ENCODE measurements at regions of chr11 and their contacts with region 1.

Region 1: GRCh38 chr11:117107701-117108590 is 9.7 kb upstream of the SIK3 start:
- DNase-seq: no peak
- ATAC-seq: no peak
- H3K4me3 ChIP-seq: no peak overlapping the region
- H3K27ac ChIP-seq: no peak overlapping the region
- H3K4me1 ChIP-seq: no peaks in the 10 kb centered on the region
- H3K27me3 ChIP-seq: no peaks in the 10 kb centered on the region
- CTCF ChIP-seq: no peak

Region 2: GRCh38 chr11:116787786-116788486 is 320.0 kb before region 1 on chr11 and contains the start of gene ZPR1:
- intact Hi-C with region 1: loop called (anchors 10 kb)
- DNase-seq: peak; percentile 95
- ATAC-seq: peak; percentile 90
- H3K4me3 ChIP-seq: peak within 1 kb of the TSS; percentile 89
- H3K27ac ChIP-seq: peak within 1 kb of the TSS; percentile 93
- H3K4me1 ChIP-seq: peaks cover 21% of the 10 kb centered on the region
- H3K27me3 ChIP-seq: no peaks in the 10 kb centered on the region
- CTCF ChIP-seq: no peak
- total RNA-seq, gene ZPR1: 43.1 TPM

Region 3: GRCh38 chr11:116879800-116880625 is 227.9 kb before region 1 on chr11:
- intact Hi-C with region 1: loop called (anchors 5 kb)
- DNase-seq: no peak
- ATAC-seq: peak; percentile 92
- H3K4me3 ChIP-seq: no peak overlapping the region
- H3K27ac ChIP-seq: no peak overlapping the region
- H3K4me1 ChIP-seq: no peaks in the 10 kb centered on the region
- H3K27me3 ChIP-seq: no peaks in the 10 kb centered on the region
- CTCF ChIP-seq: peak; percentile 61

Region 4: GRCh38 chr11:116901211-116901610 is 206.7 kb before region 1 on chr11:
- intact Hi-C with region 1: no loop called
- DNase-seq: no peak
- ATAC-seq: no peak
- H3K4me3 ChIP-seq: no peak overlapping the region
- H3K27ac ChIP-seq: no peak overlapping the region
- H3K4me1 ChIP-seq: no peaks in the 10 kb centered on the region
- H3K27me3 ChIP-seq: no peaks in the 10 kb centered on the region
- CTCF ChIP-seq: no peak

Region 5: DNA sequence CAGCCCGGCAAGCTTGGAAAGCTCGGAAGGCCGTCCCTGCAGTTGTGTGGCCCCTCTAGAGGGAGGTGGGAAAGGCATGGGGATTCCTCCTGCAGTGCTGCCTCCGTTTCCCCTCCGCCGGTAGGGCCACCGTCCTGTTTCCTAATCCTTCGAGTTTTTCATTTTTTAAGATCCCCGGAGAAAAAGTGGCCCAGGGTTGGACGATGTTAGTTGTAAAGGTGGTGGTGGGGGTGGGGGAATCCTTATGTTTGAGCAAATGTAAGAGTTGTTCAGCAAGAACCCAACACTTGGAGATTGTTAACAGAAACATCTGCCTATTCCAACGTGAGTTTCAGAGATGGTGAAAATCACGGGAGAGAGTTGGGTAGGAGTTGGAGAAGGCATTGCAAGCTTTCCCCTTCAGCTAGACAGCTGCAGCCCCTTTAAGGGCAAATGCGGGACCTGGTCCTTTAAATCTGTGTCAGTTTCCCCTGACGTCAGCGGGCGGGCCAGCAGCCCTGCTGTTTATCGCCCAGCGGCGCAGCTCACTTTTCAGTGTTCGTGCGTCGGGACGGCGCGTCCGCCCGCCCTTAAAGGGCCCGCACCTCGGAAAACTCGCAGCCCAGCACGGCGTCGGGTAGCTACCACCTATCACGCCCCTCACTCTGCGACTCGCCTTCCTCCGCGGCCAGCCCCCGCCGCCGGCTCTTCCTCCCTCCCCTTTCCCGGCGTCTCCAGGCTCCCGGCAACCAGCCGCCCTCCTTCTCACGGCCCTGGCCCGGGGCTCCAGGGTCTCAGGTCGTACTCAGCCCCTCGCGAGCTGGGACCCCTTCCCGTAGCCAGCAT is 70.5 kb after region 1 on chr11 and contains the start of gene SIDT2:
- intact Hi-C with region 1: no loop called
- DNase-seq: peak; percentile 97
- ATAC-seq: peak; percentile 94
- H3K4me3 ChIP-seq: peak within 1 kb of the TSS; percentile 87
- H3K27ac ChIP-seq: peak within 1 kb of the TSS; percentile 88
- H3K4me1 ChIP-seq: peaks cover 31% of the 10 kb centered on the region
- H3K27me3 ChIP-seq: no peaks in the 10 kb centered on the region
- CTCF ChIP-seq: no peak
- total RNA-seq, gene SIDT2: 107 TPM

Region 6: GRCh38 chr11:117226388-117227385 is 118.7 kb after region 1 on chr11:
- intact Hi-C with region 1: loop called (anchors 10 kb)
- DNase-seq: no peak
- ATAC-seq: peak; percentile 93
- H3K4me3 ChIP-seq: no peak overlapping the region
- H3K27ac ChIP-seq: no peak overlapping the region
- H3K4me1 ChIP-seq: peaks cover 14% of the 10 kb centered on the region
- H3K27me3 ChIP-seq: no peaks in the 10 kb centered on the region
- CTCF ChIP-seq: peak; percentile 85

Region 7: GRCh38 chr11:117281159-117281558 is 173.2 kb after region 1 on chr11:
- intact Hi-C with region 1: no loop called
- DNase-seq: no peak
- ATAC-seq: peak; percentile 52
- H3K4me3 ChIP-seq: no peak overlapping the region
- H3K27ac ChIP-seq: peak overlapping the region; percentile 55
- H3K4me1 ChIP-seq: no peaks in the 10 kb centered on the region
- H3K27me3 ChIP-seq: no peaks in the 10 kb centered on the region
- CTCF ChIP-seq: no peak

Region 8: GRCh38 chr11:117419482-117420142 is 311.7 kb after region 1 on chr11:
- intact Hi-C with region 1: no loop called
- DNase-seq: peak; percentile 54
- ATAC-seq: no peak
- H3K4me3 ChIP-seq: no peak overlapping the region
- H3K27ac ChIP-seq: no peak overlapping the region
- H3K4me1 ChIP-seq: no peaks in the 10 kb centered on the region
- H3K27me3 ChIP-seq: no peaks in the 10 kb centered on the region
- CTCF ChIP-seq: no peak

Measured in upper lobe of right lung (tissue), 1 donor.